CD8-positive, alpha-beta T cell (primary cell): ENCODE measurements at regions of chr3 and their contacts with region 1.

Region 1: DNA sequence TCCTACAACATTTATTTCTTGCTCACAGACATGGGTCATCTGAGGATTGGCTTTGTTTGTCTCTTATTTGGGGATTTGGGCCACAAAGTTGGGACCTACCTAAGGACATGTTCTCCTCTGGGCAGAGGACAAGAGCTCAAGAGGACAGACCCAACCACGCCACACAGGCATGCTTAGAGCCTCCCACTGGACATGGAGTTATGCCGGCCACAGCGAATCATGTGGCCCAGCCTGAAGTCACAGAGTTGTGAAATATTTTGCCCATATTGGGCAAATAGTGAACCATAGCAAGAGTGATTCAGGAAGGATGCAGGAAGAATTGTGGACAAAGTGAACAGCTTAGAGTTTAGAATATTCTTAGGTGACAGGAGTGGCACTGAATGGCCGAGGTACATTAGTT is 9.9 kb downstream of the TRAK1 start:
- DNase-seq: no peak
- ATAC-seq: no peak
- H3K4me3 ChIP-seq: no peak overlapping the region
- H3K4me3 Mint-ChIP-seq: no peak overlapping the region
- H3K27ac ChIP-seq: no peak overlapping the region
- H3K27ac Mint-ChIP-seq: no peak overlapping the region
- H3K4me1 ChIP-seq: no peaks in the 10 kb centered on the region
- H3K4me1 Mint-ChIP-seq: peaks cover 11% of the 10 kb centered on the region
- H3K27me3 ChIP-seq: no peaks in the 10 kb centered on the region
- H3K27me3 Mint-ChIP-seq: no peaks in the 10 kb centered on the region
- CTCF ChIP-seq: no peak

Region 2: DNA sequence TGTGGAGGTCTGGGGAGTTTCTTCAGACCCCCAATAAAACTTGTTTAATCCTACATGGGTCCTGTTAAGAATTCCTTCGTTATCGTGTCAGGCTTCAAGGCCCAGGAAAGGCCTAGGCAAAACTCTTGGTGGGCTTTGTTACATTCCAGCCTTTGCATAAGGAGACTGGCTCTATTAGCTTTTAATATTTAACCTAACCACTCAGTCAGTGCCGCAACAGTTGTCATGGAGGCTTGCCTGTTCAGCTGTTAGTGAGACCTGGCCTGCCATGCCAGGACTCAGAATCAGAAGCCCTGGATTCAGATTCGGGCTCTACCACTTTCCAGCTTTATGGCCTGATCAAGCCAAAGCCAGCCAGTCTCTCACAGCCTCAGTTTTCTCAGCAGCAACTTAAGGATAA is 1772.0 kb before region 1 on chr3:
- CTCF ChIA-PET with region 1: interaction called, 11 read pairs
- POLR2A ChIA-PET with region 1: no interaction called
- intact Hi-C with region 1: loop called (anchors 1 to 2 kb)
- DNase-seq: no peak
- ATAC-seq: no peak
- H3K4me3 ChIP-seq: no peak overlapping the region
- H3K4me3 Mint-ChIP-seq: no peak overlapping the region
- H3K27ac ChIP-seq: no peak overlapping the region
- H3K27ac Mint-ChIP-seq: no peak overlapping the region
- H3K4me1 ChIP-seq: no peaks in the 10 kb centered on the region
- H3K4me1 Mint-ChIP-seq: peaks cover 3% of the 10 kb centered on the region
- H3K27me3 ChIP-seq: no peaks in the 10 kb centered on the region
- H3K27me3 Mint-ChIP-seq: peaks cover 3% of the 10 kb centered on the region
- CTCF ChIP-seq: no peak

Region 3: DNA sequence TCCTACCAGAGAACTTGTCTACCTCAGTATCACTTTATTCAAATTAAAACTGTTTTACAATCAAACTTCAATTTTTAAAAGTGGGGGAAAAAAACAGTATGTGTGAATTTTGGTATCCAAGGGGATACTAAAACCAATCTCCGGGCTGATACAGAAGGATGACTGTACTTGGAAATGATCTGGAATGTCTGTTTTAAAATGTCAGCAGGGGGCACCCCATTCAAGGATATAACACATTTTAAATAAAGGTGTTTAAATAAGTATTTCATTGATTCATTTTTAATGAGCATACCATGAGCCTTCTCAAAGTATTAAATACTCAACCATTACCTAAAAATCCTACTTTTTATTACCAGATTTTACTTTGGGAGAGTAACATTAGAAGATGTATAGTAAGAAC is 207.1 kb before region 1 on chr3:
- CTCF ChIA-PET with region 1: interaction called, 104 read pairs
- POLR2A ChIA-PET with region 1: no interaction called
- intact Hi-C with region 1: loop called (anchors 1 kb)
- DNase-seq: peak in 2 of 9 experiments; percentile 48 to 58
- ATAC-seq: no peak
- H3K4me3 ChIP-seq: no peak overlapping the region
- H3K4me3 Mint-ChIP-seq: no peak overlapping the region
- H3K27ac ChIP-seq: no peak overlapping the region
- H3K27ac Mint-ChIP-seq: no peak overlapping the region
- H3K4me1 ChIP-seq: no peaks in the 10 kb centered on the region
- H3K4me1 Mint-ChIP-seq: no peaks in the 10 kb centered on the region
- H3K27me3 ChIP-seq: no peaks in the 10 kb centered on the region
- H3K27me3 Mint-ChIP-seq: no peaks in the 10 kb centered on the region
- CTCF ChIP-seq: peak; percentile 52

Region 4: GRCh38 chr3:42007785-42008184 is 93.3 kb before region 1 on chr3:
- CTCF ChIA-PET with region 1: interaction called, 11 read pairs
- POLR2A ChIA-PET with region 1: no interaction called
- intact Hi-C with region 1: loop called in 1 of 2 experiments (anchors 5 kb)
- DNase-seq: no peak
- ATAC-seq: no peak
- H3K4me3 ChIP-seq: no peak overlapping the region
- H3K4me3 Mint-ChIP-seq: no peak overlapping the region
- H3K27ac ChIP-seq: no peak overlapping the region
- H3K27ac Mint-ChIP-seq: no peak overlapping the region
- H3K4me1 ChIP-seq: peaks cover 2% of the 10 kb centered on the region
- H3K4me1 Mint-ChIP-seq: peaks cover 5% of the 10 kb centered on the region
- H3K27me3 ChIP-seq: no peaks in the 10 kb centered on the region
- H3K27me3 Mint-ChIP-seq: no peaks in the 10 kb centered on the region
- CTCF ChIP-seq: no peak

Region 5: GRCh38 chr3:42080452-42080891 is 20.6 kb before region 1 on chr3:
- CTCF ChIA-PET with region 1: interaction called, 17 read pairs
- POLR2A ChIA-PET with region 1: interaction called, 3 read pairs
- intact Hi-C with region 1: no loop called
- DNase-seq: peak in 3 of 9 experiments; percentile 23 to 47 (median 39)
- ATAC-seq: peak; percentile 52
- H3K4me3 ChIP-seq: no peak overlapping the region
- H3K4me3 Mint-ChIP-seq: no peak overlapping the region
- H3K27ac ChIP-seq: peak overlapping the region in 1 of 2 experiments; percentile 17
- H3K27ac Mint-ChIP-seq: peak overlapping the region; percentile 78
- H3K4me1 ChIP-seq: peaks cover 10% of the 10 kb centered on the region
- H3K4me1 Mint-ChIP-seq: peaks cover 53% of the 10 kb centered on the region
- H3K27me3 ChIP-seq: no peaks in the 10 kb centered on the region
- H3K27me3 Mint-ChIP-seq: no peaks in the 10 kb centered on the region
- CTCF ChIP-seq: no peak

Region 6: GRCh38 chr3:42443819-42444436 is 342.9 kb after region 1 on chr3:
- CTCF ChIA-PET with region 1: no interaction called
- POLR2A ChIA-PET with region 1: no interaction called
- intact Hi-C with region 1: loop called in 1 of 2 experiments (anchors 5 kb)
- DNase-seq: peak; percentile 67 to 91 (median 72)
- ATAC-seq: peak; percentile 82
- H3K4me3 ChIP-seq: no peak overlapping the region
- H3K4me3 Mint-ChIP-seq: no peak overlapping the region
- H3K27ac ChIP-seq: no peak overlapping the region
- H3K27ac Mint-ChIP-seq: no peak overlapping the region
- H3K4me1 ChIP-seq: no peaks in the 10 kb centered on the region
- H3K4me1 Mint-ChIP-seq: no peaks in the 10 kb centered on the region
- H3K27me3 ChIP-seq: no peaks in the 10 kb centered on the region
- H3K27me3 Mint-ChIP-seq: peaks cover 6% of the 10 kb centered on the region
- CTCF ChIP-seq: peak; percentile 95